ENCODE measurements at regions of chr10 and their contacts with region 1.

Region 1: GRCh38 chr10:34815185-34816084 is at the start of gene PARD3:
- DNase-seq: peak; percentile 70
- ATAC-seq: peak; percentile 77 to 86
- total RNA-seq, gene PARD3: 23.1 to 29.7 TPM

Region 2: GRCh38 chr10:34666008-34666705 is 149.3 kb before region 1 on chr10:
- intact Hi-C with region 1: loop called (anchors 5 to 10 kb)
- DNase-seq: no peak
- ATAC-seq: peak; percentile 90

Region 3: DNA sequence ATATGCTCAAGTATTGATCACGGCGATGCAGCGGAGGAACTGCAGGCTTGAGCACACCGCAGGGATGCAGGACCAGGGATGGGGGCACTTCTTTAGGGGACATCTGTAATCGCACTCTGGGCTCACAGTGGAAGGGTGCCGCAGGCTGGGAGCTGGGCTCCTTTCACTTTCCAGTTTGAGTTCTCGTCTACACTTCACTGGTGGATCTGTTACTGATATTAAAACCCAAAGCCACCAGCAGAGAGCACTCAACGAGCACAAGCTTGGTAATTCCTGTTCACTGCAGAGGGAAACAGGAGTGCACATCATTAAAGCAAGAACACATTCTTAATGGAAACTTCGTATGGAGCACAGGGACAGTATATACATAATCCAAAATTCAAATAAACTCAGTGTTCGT is 91.7 kb before region 1 on chr10:
- intact Hi-C with region 1: loop called (anchors 10 kb)
- DNase-seq: peak; percentile 33
- ATAC-seq: peak; percentile 70 to 72

Measured in left cardiac atrium (tissue), 4 donors.